AG04449 (cell line): ENCODE measurements at regions of chr15 and their contacts with region 1.

Region 1: GRCh38 chr15:66901336-66902100 is 163.9 kb upstream of the SMAD3 start:
- DNase-seq: no peak
- H3K4me3 ChIP-seq: no peak overlapping the region
- CTCF ChIP-seq: no peak

Region 2: GRCh38 chr15:66912001-66912400 is 10.5 kb after region 1 on chr15:
- CTCF ChIA-PET with region 1: interaction called, 14 read pairs
- POLR2A ChIA-PET with region 1: no interaction called
- DNase-seq: no peak
- H3K4me3 ChIP-seq: no peak overlapping the region
- CTCF ChIP-seq: no peak